ENCODE measurements at regions of chr12 and their contacts with region 1.

Region 1: DNA sequence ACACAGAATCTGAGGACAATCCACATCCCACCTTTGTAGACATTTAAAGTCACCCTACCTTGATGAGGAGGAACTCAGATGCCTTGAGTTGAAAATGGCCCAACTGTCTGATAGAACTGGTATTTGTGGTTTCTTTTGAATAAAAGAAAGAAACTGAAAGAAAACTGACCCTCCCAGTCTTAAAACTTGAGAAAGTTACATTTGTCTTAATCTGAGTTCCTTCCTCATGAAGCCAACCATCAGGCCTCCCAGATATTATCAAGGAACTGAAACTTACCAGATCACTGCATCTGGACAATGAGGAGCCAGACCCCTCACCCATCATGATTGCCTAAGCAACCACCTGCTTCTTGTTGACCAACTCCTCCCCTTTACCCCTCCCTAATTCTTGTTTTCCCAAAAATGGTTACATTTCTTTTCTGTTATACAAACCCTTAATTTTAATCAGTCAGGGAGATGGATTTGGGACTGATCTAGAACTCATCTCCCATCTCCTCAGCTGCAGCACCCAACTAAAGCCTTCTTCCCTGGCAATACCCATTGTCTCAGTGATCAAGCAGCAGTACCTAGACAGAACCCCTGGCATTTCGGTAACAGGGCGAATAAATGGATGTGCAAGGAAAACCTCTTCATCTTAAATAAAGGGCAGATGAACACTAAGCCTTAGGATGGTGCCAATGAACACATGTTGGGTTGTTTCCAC is 72.0 kb upstream of the RESF1 start:
- DNase-seq: peak; percentile 74
- ATAC-seq: peak; percentile 73
- H3K4me3 ChIP-seq: peak overlapping the region; percentile 60 to 93 (median 69)
- H3K4me3 Mint-ChIP-seq: peak overlapping the region; percentile 90
- H3K27ac ChIP-seq: peak overlapping the region; percentile 76 to 86
- H3K27ac Mint-ChIP-seq: peak overlapping the region; percentile 98
- H3K4me1 ChIP-seq: peaks cover 41 to 62% of the 10 kb centered on the region in 2 donors
- H3K4me1 Mint-ChIP-seq: peaks cover 72% of the 10 kb centered on the region
- H3K27me3 ChIP-seq: no peaks in the 10 kb centered on the region
- H3K27me3 Mint-ChIP-seq: no peaks in the 10 kb centered on the region
- CTCF ChIP-seq: no peak

Region 2: GRCh38 chr12:31672521-31672920 is 214.7 kb before region 1 on chr12:
- CTCF ChIA-PET with region 1: no interaction called
- POLR2A ChIA-PET with region 1: no interaction called
- intact Hi-C with region 1: no loop called
- DNase-seq: no peak
- ATAC-seq: no peak
- H3K4me3 ChIP-seq: no peak overlapping the region
- H3K4me3 Mint-ChIP-seq: no peak overlapping the region
- H3K27ac ChIP-seq: no peak overlapping the region
- H3K27ac Mint-ChIP-seq: no peak overlapping the region
- H3K4me1 ChIP-seq: no peaks in the 10 kb centered on the region
- H3K4me1 Mint-ChIP-seq: no peaks in the 10 kb centered on the region
- H3K27me3 ChIP-seq: no peaks in the 10 kb centered on the region
- H3K27me3 Mint-ChIP-seq: no peaks in the 10 kb centered on the region
- CTCF ChIP-seq: no peak

Region 3: GRCh38 chr12:31832740-31833729 is 54.2 kb before region 1 on chr12:
- CTCF ChIA-PET with region 1: no interaction called
- POLR2A ChIA-PET with region 1: no interaction called
- intact Hi-C with region 1: loop called (anchors 2 kb)
- DNase-seq: peak; percentile 84
- ATAC-seq: peak; percentile 80
- H3K4me3 ChIP-seq: peak overlapping the region in 1 of 5 experiments; percentile 47
- H3K4me3 Mint-ChIP-seq: peak overlapping the region; percentile 82
- H3K27ac ChIP-seq: peak overlapping the region; percentile 65 to 78
- H3K27ac Mint-ChIP-seq: peak overlapping the region; percentile 96
- H3K4me1 ChIP-seq: peaks cover 58 to 70% of the 10 kb centered on the region in 2 donors
- H3K4me1 Mint-ChIP-seq: peaks cover 70% of the 10 kb centered on the region
- H3K27me3 ChIP-seq: no peaks in the 10 kb centered on the region
- H3K27me3 Mint-ChIP-seq: no peaks in the 10 kb centered on the region
- CTCF ChIP-seq: no peak

Region 4: DNA sequence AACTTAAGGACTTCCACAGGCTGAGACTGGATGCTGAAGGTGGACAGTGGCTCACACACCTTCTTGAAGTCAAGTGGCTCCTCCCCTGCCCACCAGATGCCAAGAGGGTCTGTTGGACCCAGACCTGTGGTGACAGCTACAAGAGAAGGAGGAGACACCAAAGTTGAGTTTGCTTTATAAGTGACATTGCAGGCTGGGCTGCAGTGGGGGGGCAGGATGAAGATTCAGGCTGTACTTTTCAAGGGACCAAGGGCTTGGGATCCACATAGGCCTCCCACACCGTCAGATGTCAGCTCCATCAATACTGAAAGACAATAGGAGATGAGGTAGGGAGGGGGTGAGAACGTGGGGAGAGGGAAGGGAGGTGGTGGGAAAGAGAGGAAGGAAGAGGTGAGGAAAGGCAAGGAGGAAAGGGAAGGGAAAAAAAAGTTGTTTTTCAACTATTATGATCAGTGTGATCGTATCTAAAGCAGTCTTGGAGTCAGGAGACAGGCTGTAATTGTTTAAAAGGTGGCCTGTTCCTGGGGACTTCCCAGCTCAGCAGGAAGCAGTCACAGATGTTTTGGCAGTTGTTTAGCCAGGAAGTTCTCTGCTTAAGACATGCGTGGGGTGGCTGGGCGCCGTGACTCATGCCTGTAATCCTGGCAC is 12.2 kb before region 1 on chr12:
- CTCF ChIA-PET with region 1: interaction called, 6 read pairs
- POLR2A ChIA-PET with region 1: interaction called, 8 read pairs
- intact Hi-C with region 1: loop called (anchors 1 kb)
- DNase-seq: peak; percentile 88
- ATAC-seq: peak; percentile 83
- H3K4me3 ChIP-seq: peak overlapping the region in 4 of 5 experiments; percentile 3 to 42 (median 30)
- H3K4me3 Mint-ChIP-seq: peak overlapping the region; percentile 85
- H3K27ac ChIP-seq: peak overlapping the region; percentile 98 to 100
- H3K27ac Mint-ChIP-seq: peak overlapping the region; percentile 100
- H3K4me1 ChIP-seq: peaks cover 63 to 72% of the 10 kb centered on the region in 2 donors
- H3K4me1 Mint-ChIP-seq: peaks cover 75% of the 10 kb centered on the region
- H3K27me3 ChIP-seq: no peaks in the 10 kb centered on the region
- H3K27me3 Mint-ChIP-seq: no peaks in the 10 kb centered on the region
- CTCF ChIP-seq: no peak

Region 5: DNA sequence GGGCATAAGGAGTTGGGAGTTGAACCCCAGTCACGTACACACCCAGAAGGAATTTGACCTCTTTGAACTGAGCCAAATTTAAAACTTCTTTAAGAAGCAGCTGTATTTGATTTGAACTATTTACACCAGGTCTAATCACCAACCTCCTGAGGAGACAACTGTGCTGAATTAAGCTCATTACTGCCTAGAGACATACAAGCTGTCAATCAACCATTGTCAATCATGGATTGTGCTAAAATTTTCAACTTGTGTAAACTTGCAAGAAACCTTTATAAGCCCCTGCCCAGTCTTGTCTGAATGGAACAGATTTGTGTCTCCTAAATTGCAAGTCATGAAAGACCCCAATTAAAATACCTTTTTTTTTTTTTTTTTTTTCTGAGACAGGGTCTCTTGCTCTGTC is 27.7 kb after region 1 on chr12:
- CTCF ChIA-PET with region 1: interaction called, 3 read pairs
- POLR2A ChIA-PET with region 1: interaction called, 12 read pairs
- intact Hi-C with region 1: no loop called
- DNase-seq: no peak
- ATAC-seq: no peak
- H3K4me3 ChIP-seq: no peak overlapping the region
- H3K4me3 Mint-ChIP-seq: no peak overlapping the region
- H3K27ac ChIP-seq: no peak overlapping the region
- H3K27ac Mint-ChIP-seq: no peak overlapping the region
- H3K4me1 ChIP-seq: no peaks in the 10 kb centered on the region
- H3K4me1 Mint-ChIP-seq: peaks cover 3% of the 10 kb centered on the region
- H3K27me3 ChIP-seq: no peaks in the 10 kb centered on the region
- H3K27me3 Mint-ChIP-seq: no peaks in the 10 kb centered on the region
- CTCF ChIP-seq: no peak

Region 6: DNA sequence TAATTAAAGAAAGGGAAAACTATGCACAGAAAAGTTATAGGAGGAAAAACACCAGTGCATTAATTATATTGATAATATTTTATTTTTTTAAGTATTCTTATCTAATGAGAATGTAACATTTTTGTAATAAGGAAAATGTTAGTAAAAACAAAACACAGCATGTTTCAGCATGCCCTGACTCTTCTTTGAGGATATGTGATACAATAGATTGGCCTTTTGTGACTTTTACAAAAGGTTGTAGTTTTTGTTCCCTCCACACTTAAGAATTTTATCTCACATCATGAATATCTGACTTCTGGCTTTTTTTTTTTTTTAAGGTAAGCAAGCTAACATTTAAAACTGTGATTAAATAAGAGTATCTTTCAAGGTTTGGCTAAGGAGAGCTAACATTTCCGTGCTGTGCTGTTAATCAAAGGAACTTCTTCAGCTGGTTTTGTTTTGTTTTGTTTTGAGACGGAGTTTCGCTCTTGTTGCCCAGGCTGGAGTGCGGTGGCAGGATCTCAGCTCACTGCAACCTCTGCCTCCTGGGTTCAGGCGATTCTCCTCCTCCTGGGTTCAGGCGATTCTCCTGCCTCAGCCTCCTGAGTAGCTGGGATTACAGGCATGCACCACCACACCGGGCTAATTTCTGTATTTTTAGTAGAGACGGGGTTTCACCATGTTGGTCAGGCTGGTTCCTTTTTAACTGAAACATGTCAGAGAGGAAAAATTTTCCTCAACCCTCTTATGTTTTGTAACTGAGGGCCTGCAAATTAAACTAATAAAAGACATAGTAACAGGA is 41.2 kb after region 1 on chr12:
- CTCF ChIA-PET with region 1: no interaction called
- POLR2A ChIA-PET with region 1: no interaction called
- intact Hi-C with region 1: loop called (anchors 5 kb)
- DNase-seq: no peak
- ATAC-seq: no peak
- H3K4me3 ChIP-seq: peak overlapping the region in 2 of 5 experiments; percentile 32 to 34
- H3K4me3 Mint-ChIP-seq: peak overlapping the region; percentile 86
- H3K27ac ChIP-seq: peak overlapping the region in 1 of 2 donors; percentile 51
- H3K27ac Mint-ChIP-seq: peak overlapping the region; percentile 93
- H3K4me1 ChIP-seq: peaks cover 11 to 15% of the 10 kb centered on the region in 2 donors
- H3K4me1 Mint-ChIP-seq: peaks cover 29% of the 10 kb centered on the region
- H3K27me3 ChIP-seq: no peaks in the 10 kb centered on the region
- H3K27me3 Mint-ChIP-seq: no peaks in the 10 kb centered on the region
- CTCF ChIP-seq: no peak

Region 7: DNA sequence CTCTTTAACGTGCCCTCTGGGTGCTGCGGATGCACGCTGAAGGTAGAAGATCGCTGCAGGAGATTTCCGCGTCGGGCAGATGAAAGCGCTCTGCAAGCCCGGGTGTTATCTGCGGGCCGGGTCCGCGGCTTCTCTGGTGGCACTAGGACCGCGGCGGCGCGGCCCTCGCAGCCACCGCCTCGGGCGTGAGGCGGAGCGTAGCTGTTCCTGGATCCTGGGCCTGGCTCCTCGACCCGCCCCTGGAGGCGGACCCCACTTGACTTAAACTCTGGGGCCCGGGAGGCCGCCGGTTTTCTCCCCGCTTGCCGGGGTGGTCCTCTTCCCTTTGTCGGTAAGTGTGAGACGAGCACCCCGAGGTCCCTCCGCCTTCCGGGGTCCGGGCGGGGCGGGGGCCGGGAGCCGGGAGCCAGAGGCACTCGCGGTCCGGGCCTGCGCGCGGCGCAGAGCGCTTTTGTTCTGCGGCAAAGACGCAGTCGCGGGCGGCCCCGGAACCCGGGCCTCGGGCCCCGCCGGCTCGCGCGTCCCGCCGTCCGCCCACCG is 72.0 kb after region 1 on chr12 and contains the start of gene RESF1:
- CTCF ChIA-PET with region 1: interaction called, 6 read pairs
- POLR2A ChIA-PET with region 1: interaction called, 11 read pairs
- intact Hi-C with region 1: loop called (anchors 5 kb)
- DNase-seq: peak; percentile 91
- ATAC-seq: peak; percentile 85
- H3K4me3 ChIP-seq: peak within 1 kb of the TSS; percentile 65 to 98 (median 70)
- H3K4me3 Mint-ChIP-seq: peak within 1 kb of the TSS; percentile 96
- H3K27ac ChIP-seq: peak within 1 kb of the TSS; percentile 79 to 82
- H3K27ac Mint-ChIP-seq: peak within 1 kb of the TSS; percentile 96
- H3K4me1 ChIP-seq: peaks cover 49 to 50% of the 10 kb centered on the region in 2 donors
- H3K4me1 Mint-ChIP-seq: peaks cover 68% of the 10 kb centered on the region
- H3K27me3 ChIP-seq: no peaks in the 10 kb centered on the region
- H3K27me3 Mint-ChIP-seq: no peaks in the 10 kb centered on the region
- CTCF ChIP-seq: no peak
- total RNA-seq, gene RESF1: 350 and 352 TPM in 2 replicates